ENCODE measurements at regions of chr16 and their contacts with region 1.

Region 1: DNA sequence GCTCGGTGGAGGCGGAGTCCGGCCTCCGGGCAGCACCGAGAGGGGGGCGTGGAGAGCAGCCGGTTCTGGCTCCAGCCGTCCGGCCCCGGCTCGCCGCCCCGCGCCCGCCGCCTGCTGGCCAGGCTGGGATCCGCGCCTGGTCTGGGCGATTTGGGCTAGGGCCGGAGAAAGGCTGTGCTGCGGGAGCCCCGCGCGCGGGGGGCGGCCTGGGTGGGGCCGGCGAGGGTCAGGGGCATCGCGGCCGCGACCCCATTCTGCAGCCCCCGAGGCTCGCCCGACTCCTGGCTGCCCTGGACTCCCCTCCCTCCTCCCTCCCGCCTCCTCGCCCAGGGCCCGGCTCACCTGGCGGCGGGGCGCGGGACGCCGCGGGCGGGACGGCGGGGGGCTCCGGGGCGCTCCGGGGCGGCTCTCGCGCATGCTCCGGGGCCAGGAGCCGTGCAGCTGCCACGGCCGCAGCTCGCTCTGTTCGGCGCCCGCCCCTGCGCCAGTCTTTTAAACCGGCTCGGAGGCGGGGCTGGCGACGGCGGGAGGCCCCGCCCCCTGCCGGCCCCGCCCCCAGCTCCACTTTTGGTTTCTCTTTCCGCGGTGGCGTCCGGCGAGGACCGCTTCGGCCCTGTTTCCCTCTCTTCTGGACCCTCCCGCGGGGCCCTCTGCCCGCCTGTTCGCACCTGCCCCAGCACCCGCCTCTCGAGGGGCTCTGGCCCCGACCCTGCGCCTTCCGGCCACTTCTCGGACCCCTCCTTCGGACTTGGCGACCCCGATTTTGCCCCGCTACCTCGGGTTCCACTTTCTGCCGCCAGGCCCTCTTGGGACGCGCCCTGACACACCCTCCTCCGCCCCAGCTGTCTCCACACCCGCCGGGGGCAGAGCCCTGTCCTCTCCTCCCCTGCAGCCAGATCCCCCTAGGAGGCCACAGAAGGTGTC is at the start of gene SOCS1:
- DNase-seq: peak; percentile 72 to 95 (median 88)
- ATAC-seq: peak; percentile 58
- H3K4me3 ChIP-seq: peak within 1 kb of the TSS; percentile 96
- H3K4me3 Mint-ChIP-seq: peak within 1 kb of the TSS; percentile 99
- H3K27ac ChIP-seq: peak within 1 kb of the TSS; percentile 83 to 86
- H3K27ac Mint-ChIP-seq: peak within 1 kb of the TSS; percentile 97
- H3K4me1 ChIP-seq: peaks cover 66% of the 10 kb centered on the region
- H3K4me1 Mint-ChIP-seq: peaks cover 56% of the 10 kb centered on the region
- H3K27me3 ChIP-seq: no peaks in the 10 kb centered on the region
- H3K27me3 Mint-ChIP-seq: no peaks in the 10 kb centered on the region
- CTCF ChIP-seq: peak; percentile 75
- total RNA-seq, gene SOCS1: 71.3 to 71.4 TPM

Region 2: DNA sequence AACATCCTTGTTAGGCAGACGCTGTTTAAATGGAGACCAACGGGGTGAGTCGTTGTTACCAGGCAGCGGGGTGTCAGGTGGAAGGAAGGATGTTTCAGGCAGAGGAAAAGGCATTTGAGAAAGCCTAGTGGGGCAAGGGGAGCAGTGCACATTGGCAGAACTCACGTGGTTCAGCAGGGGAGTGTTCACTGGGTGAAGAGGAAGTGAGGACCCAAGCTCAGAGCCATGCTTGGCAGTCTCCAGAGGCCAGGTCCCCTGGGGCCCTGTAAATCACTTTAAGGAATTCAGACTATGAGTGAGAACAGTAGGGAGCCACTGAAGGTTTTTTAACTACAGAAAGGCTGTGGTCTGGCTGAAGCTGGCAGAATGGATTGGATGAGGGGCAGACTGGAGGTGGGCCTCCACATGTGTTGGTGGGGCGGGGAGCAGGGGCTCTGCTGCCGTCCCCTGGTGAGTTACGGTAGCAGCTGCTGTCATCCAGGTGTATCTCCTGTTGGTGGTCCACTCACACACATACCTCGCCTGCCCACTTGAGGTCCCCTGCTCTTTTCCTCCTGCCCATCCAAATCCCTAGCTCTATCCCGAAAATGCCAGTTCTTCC is 306.5 kb before region 1 on chr16:
- CTCF ChIA-PET with region 1: interaction called, 6 read pairs
- POLR2A ChIA-PET with region 1: interaction called, 19 read pairs
- intact Hi-C with region 1: no loop called
- DNase-seq: peak in 12 of 14 experiments; percentile 21 to 75 (median 44)
- ATAC-seq: peak; percentile 87
- H3K4me3 ChIP-seq: no peak overlapping the region
- H3K4me3 Mint-ChIP-seq: peak overlapping the region; percentile 61
- H3K27ac ChIP-seq: no peak overlapping the region
- H3K27ac Mint-ChIP-seq: peak overlapping the region; percentile 38
- H3K4me1 ChIP-seq: peaks cover 51% of the 10 kb centered on the region
- H3K4me1 Mint-ChIP-seq: peaks cover 66% of the 10 kb centered on the region
- H3K27me3 ChIP-seq: no peaks in the 10 kb centered on the region
- H3K27me3 Mint-ChIP-seq: no peaks in the 10 kb centered on the region
- CTCF ChIP-seq: no peak

Region 3: GRCh38 chr16:10981697-10982216 is 274.2 kb before region 1 on chr16:
- CTCF ChIA-PET with region 1: interaction called, 4 read pairs
- POLR2A ChIA-PET with region 1: interaction called, 10 read pairs
- intact Hi-C with region 1: no loop called
- DNase-seq: peak in 10 of 14 experiments; percentile 12 to 50 (median 33)
- ATAC-seq: peak; percentile 48
- H3K4me3 ChIP-seq: no peak overlapping the region
- H3K4me3 Mint-ChIP-seq: no peak overlapping the region
- H3K27ac ChIP-seq: no peak overlapping the region
- H3K27ac Mint-ChIP-seq: no peak overlapping the region
- H3K4me1 ChIP-seq: peaks cover 9% of the 10 kb centered on the region
- H3K4me1 Mint-ChIP-seq: peaks cover 18% of the 10 kb centered on the region
- H3K27me3 ChIP-seq: no peaks in the 10 kb centered on the region
- H3K27me3 Mint-ChIP-seq: no peaks in the 10 kb centered on the region
- CTCF ChIP-seq: no peak

Region 4: DNA sequence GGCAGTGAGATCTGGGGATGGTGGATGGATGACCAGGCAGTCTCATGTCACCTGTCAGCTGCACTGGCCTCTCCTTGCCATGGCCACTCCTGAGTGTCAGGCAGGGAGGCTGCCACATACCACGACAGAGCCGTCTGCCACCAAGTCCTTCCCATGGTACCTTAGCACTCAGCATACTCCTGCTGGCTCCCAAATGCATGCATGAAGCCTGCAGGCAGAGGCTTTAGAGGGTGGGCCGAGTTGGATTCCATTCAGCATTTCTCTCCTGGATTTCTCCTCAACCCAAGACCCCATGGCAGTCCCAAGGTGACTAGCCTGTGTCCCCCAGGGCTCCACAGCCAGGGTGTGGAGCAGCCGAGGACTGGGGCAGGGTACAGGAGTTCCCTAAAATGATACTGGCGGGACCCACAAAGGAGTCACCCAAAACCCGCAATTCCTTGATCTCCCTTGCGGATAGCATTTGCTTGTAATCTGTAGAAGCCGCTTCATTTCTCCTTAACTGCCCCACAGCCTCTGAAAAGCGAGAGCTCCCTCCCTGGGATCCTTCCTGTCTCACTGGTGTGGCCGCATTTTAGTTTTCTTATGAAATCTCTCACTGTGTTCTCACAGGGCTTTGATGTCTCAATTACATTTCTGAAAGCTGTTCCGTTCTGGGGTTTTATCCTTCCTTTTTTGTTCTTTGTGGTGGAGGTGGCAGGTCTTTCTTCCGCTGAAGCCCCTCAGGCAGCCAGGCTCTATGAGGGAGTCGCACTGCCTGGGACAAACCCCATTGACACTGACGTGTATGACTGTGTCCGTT is 141.4 kb before region 1 on chr16:
- CTCF ChIA-PET with region 1: no interaction called
- POLR2A ChIA-PET with region 1: interaction called, 3 read pairs
- intact Hi-C with region 1: loop called in 1 of 2 experiments (anchors 10 kb)
- DNase-seq: peak in 3 of 14 experiments; percentile 22 to 61 (median 33)
- ATAC-seq: peak; percentile 71
- H3K4me3 ChIP-seq: no peak overlapping the region
- H3K4me3 Mint-ChIP-seq: peak overlapping the region; percentile 71
- H3K27ac ChIP-seq: peak overlapping the region in 1 of 2 donors; percentile 0
- H3K27ac Mint-ChIP-seq: peak overlapping the region; percentile 56
- H3K4me1 ChIP-seq: peaks cover 30% of the 10 kb centered on the region
- H3K4me1 Mint-ChIP-seq: peaks cover 30% of the 10 kb centered on the region
- H3K27me3 ChIP-seq: no peaks in the 10 kb centered on the region
- H3K27me3 Mint-ChIP-seq: no peaks in the 10 kb centered on the region
- CTCF ChIP-seq: no peak

Region 5: GRCh38 chr16:11232852-11233726 is 22.9 kb before region 1 on chr16:
- CTCF ChIA-PET with region 1: interaction called, 16 read pairs
- POLR2A ChIA-PET with region 1: interaction called, 195 read pairs
- intact Hi-C with region 1: loop called in 1 of 2 experiments (anchors 2 kb)
- DNase-seq: peak; percentile 59 to 94 (median 81)
- ATAC-seq: peak; percentile 86
- H3K4me3 ChIP-seq: peak overlapping the region; percentile 35
- H3K4me3 Mint-ChIP-seq: peak overlapping the region; percentile 67
- H3K27ac ChIP-seq: peak overlapping the region; percentile 86 to 87
- H3K27ac Mint-ChIP-seq: peak overlapping the region; percentile 95
- H3K4me1 ChIP-seq: peaks cover 58% of the 10 kb centered on the region
- H3K4me1 Mint-ChIP-seq: peaks cover 58% of the 10 kb centered on the region
- H3K27me3 ChIP-seq: no peaks in the 10 kb centered on the region
- H3K27me3 Mint-ChIP-seq: no peaks in the 10 kb centered on the region
- CTCF ChIP-seq: no peak

Region 6: DNA sequence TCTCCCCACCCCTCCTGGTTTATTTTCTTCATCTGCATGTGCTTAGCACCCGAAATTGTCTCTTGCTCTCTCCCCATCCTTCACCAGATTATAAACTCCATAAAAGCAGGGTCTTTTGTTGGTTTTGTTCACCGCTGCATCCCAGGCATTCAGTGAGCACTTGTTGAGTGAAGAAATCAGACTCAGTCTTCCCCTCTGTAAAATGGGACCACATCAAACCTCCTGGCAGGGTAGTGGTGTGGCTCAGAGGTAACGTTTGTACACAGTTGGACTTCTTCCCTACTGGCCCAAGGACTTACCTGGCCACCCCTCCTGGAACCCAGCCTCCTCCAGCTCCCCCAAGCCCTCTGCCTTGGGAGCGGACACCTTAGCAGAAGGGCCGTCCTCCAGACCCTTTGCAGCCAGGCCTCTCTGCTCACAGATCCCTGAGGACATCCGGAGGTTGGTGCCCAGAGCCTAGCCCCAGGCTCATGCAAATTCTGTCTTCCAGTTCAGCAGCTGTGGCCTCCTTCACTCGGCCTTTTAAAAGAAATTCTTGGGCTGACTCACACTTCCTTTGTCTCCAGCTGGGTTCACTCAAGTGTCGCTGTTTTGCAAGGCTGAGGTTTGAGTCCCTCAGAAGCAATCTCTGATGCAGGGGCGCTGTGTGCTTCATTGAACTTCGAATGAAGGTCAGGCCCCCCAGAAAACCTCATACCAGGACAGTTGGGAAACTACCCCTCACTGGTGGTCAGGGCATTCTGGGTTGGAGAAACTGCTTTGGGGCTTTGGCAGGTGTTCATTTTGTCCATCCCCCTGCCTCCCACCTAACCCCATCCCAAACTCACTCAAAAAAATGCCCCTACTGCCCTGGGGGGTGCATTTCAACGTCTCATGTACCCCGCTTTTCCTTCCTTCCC is 72.4 kb after region 1 on chr16:
- CTCF ChIA-PET with region 1: interaction called, 3 read pairs
- POLR2A ChIA-PET with region 1: interaction called, 14 read pairs
- intact Hi-C with region 1: no loop called
- DNase-seq: peak in 13 of 14 experiments; percentile 22 to 71 (median 47)
- ATAC-seq: peak; percentile 80
- H3K4me3 ChIP-seq: peak overlapping the region; percentile 16
- H3K4me3 Mint-ChIP-seq: peak overlapping the region; percentile 31
- H3K27ac ChIP-seq: no peak overlapping the region
- H3K27ac Mint-ChIP-seq: peak overlapping the region; percentile 35
- H3K4me1 ChIP-seq: peaks cover 34% of the 10 kb centered on the region
- H3K4me1 Mint-ChIP-seq: peaks cover 27% of the 10 kb centered on the region
- H3K27me3 ChIP-seq: peaks cover 0 to 2% of the 10 kb centered on the region in 2 experiments
- H3K27me3 Mint-ChIP-seq: no peaks in the 10 kb centered on the region
- CTCF ChIP-seq: no peak

Region 7: DNA sequence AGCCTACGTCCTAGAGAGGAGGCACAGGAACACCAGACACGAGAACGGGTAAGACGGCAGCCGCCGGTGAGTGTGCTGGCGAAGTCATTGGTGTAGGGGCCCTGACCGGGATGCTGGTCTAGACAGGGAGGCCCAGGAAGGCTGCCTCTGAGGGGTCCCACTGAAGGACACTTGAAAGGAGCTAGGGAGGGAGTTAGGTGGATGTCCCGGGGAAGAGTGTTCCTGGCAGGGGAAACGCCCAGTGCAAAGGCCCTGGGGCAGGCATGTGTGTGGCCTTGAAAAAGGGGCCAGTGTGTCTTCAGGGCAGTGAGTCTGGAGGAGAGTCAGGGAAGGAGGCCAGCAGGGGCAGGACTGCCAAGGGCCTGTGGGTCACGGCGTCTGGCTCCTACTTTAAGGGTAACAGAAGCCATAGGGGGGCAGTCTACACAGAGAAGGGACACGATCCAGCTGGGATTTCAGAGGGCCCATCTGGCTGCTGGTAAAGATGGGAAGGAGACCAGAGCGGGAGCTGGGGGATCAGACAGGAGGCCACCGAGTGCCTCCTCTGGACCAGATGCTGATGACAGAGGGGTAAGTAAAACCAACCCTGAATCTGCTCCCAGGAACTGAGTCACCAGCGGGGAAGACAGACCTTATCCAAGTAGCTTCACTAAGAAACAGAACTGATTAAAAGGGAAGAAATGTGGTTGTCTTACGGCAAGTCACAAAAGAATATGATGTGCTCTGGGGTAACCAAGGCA is 214.8 kb after region 1 on chr16:
- CTCF ChIA-PET with region 1: no interaction called
- POLR2A ChIA-PET with region 1: no interaction called
- intact Hi-C with region 1: no loop called
- DNase-seq: no peak
- ATAC-seq: no peak
- H3K4me3 ChIP-seq: no peak overlapping the region
- H3K4me3 Mint-ChIP-seq: no peak overlapping the region
- H3K27ac ChIP-seq: no peak overlapping the region
- H3K27ac Mint-ChIP-seq: no peak overlapping the region
- H3K4me1 ChIP-seq: no peaks in the 10 kb centered on the region
- H3K4me1 Mint-ChIP-seq: no peaks in the 10 kb centered on the region
- H3K27me3 ChIP-seq: no peaks in the 10 kb centered on the region
- H3K27me3 Mint-ChIP-seq: no peaks in the 10 kb centered on the region
- CTCF ChIP-seq: no peak

Region 8: DNA sequence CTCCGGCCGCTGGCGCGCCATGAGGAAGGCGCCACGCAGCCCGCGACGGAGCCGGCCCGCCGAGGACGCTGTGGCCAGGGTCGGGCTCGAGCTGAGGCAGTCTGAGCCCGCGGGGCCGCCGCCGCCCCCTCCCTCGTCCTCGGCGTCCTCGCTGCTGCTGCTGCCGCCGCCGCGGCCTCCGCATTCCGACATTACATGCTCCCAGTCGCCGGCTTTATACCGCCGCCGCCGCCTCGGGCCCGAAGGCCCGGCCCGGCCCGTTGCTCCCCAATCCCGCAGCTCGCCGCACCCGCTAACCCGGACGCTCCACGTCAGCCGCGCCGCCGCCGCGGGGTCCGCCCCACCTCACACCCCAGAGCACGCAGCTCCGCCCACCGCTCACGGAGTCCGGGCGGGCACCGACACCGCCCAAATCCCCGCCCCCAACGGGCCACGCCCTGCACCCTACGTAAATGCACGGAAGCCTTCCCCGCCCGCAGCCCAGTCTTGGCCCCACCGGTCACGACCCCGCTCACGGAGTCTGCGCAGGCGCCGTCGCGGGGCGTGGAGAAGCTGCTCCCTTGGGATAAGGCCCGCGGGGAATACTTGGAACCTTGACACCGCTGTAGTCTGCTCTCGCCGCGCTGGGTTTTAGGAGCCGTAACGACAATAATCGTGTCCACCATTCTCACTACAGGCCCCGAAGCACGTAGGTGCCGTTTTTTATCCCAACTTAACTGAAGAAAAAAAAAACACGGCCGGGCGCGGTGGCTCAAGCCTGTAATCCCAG is 486.7 kb after region 1 on chr16 and contains the start of gene TXNDC11:
- CTCF ChIA-PET with region 1: interaction called, 5 read pairs
- POLR2A ChIA-PET with region 1: interaction called, 14 read pairs
- intact Hi-C with region 1: loop called in 1 of 2 experiments (anchors 5 kb)
- DNase-seq: peak; percentile 98 to 100 (median 99)
- ATAC-seq: peak; percentile 92
- H3K4me3 ChIP-seq: peak within 1 kb of the TSS; percentile 95
- H3K4me3 Mint-ChIP-seq: peak within 1 kb of the TSS; percentile 96
- H3K27ac ChIP-seq: peak within 1 kb of the TSS; percentile 86 to 92
- H3K27ac Mint-ChIP-seq: peak within 1 kb of the TSS; percentile 99
- H3K4me1 ChIP-seq: peaks cover 52% of the 10 kb centered on the region
- H3K4me1 Mint-ChIP-seq: peaks cover 60% of the 10 kb centered on the region
- H3K27me3 ChIP-seq: no peaks in the 10 kb centered on the region
- H3K27me3 Mint-ChIP-seq: no peaks in the 10 kb centered on the region
- CTCF ChIP-seq: no peak
- total RNA-seq, gene TXNDC11: 111 to 112 TPM

Measured in CD4-positive, alpha-beta T cell (primary cell).